CD4-positive, alpha-beta T cell (primary cell): ENCODE measurements at regions of chr5 and their contacts with region 1.

Region 1: DNA sequence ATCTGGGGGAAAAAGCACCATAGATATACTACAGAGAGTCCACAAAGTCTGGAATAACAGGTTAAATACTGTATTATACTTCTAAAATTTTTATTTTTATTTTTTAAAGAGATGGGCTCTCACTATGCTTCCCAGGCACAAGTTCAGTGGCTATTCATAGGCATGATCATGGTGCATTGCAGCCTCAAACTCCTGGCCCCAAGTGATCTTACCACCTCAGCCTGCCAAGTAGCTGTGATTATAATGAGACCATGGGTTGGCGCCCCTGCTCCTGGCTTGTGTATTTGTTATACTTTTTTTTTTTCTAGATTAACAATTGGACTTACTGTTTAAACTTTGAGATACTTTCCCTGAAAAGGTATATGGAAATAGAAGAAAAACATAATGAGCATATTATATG is 25.9 kb downstream of the ERBIN start:
- DNase-seq: no peak
- ATAC-seq: no peak
- H3K4me3 ChIP-seq: no peak overlapping the region
- H3K4me3 Mint-ChIP-seq: no peak overlapping the region
- H3K27ac ChIP-seq: no peak overlapping the region
- H3K27ac Mint-ChIP-seq: peak overlapping the region; percentile 83
- H3K4me1 ChIP-seq: peaks cover 10% of the 10 kb centered on the region
- H3K4me1 Mint-ChIP-seq: peaks cover 72% of the 10 kb centered on the region
- H3K27me3 ChIP-seq: no peaks in the 10 kb centered on the region
- H3K27me3 Mint-ChIP-seq: no peaks in the 10 kb centered on the region
- CTCF ChIP-seq: no peak

Region 2: GRCh38 chr5:65999061-65999723 is 46.9 kb after region 1 on chr5:
- CTCF ChIA-PET with region 1: no interaction called
- POLR2A ChIA-PET with region 1: no interaction called
- intact Hi-C with region 1: loop called in 1 of 2 experiments (anchors 5 kb)
- DNase-seq: no peak
- ATAC-seq: no peak
- H3K4me3 ChIP-seq: no peak overlapping the region
- H3K4me3 Mint-ChIP-seq: no peak overlapping the region
- H3K27ac ChIP-seq: no peak overlapping the region
- H3K27ac Mint-ChIP-seq: peak overlapping the region; percentile 28
- H3K4me1 ChIP-seq: peaks cover 1% of the 10 kb centered on the region
- H3K4me1 Mint-ChIP-seq: peaks cover 73% of the 10 kb centered on the region
- H3K27me3 ChIP-seq: no peaks in the 10 kb centered on the region
- H3K27me3 Mint-ChIP-seq: no peaks in the 10 kb centered on the region
- CTCF ChIP-seq: no peak